Breast epithelium (tissue), 4 donors: ENCODE measurements at regions of chr7 and their contacts with region 1.

Region 1: GRCh38 chr7:117446220-117446815 is 19.0 kb upstream of the ASZ1 start:
- DNase-seq: no peak
- H3K4me3 ChIP-seq: no peak overlapping the region
- H3K27ac ChIP-seq: no peak overlapping the region
- H3K4me1 ChIP-seq: no peaks in the 10 kb centered on the region
- H3K27me3 ChIP-seq: no peaks in the 10 kb centered on the region
- CTCF ChIP-seq: no peak
- POLR2A ChIP-seq: no peak

Region 2: GRCh38 chr7:117424090-117424829 is 22.1 kb before region 1 on chr7:
- intact Hi-C with region 1: no loop called
- DNase-seq: no peak
- H3K4me3 ChIP-seq: no peak overlapping the region
- H3K27ac ChIP-seq: no peak overlapping the region
- H3K4me1 ChIP-seq: no peaks in the 10 kb centered on the region
- H3K27me3 ChIP-seq: no peaks in the 10 kb centered on the region
- CTCF ChIP-seq: no peak
- POLR2A ChIP-seq: no peak

Region 3: DNA sequence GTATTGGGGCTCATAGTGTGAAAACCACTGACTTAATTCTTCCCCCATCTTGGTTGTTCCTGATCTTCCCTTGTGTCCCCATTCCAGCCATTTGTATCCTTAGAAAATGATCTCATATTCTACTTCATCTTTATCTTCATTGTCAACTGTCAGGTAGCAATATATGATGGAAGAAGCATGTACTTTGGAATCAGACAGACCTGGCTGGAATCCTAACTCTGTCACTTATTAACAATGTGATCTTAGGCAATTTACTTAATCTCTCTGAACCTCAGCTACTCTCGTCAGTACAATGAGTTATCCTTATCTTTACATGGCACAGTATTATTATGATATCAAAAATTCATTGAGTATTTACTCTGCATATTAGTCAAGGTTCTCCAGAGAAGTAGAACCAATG is 43.6 kb after region 1 on chr7:
- intact Hi-C with region 1: loop called (anchors 2 kb)
- DNase-seq: no peak
- H3K4me3 ChIP-seq: no peak overlapping the region
- H3K27ac ChIP-seq: no peak overlapping the region
- H3K4me1 ChIP-seq: no peaks in the 10 kb centered on the region
- H3K27me3 ChIP-seq: no peaks in the 10 kb centered on the region
- CTCF ChIP-seq: no peak
- POLR2A ChIP-seq: no peak